ENCODE measurements at regions of chr18 and their contacts with region 1.

Region 1: DNA sequence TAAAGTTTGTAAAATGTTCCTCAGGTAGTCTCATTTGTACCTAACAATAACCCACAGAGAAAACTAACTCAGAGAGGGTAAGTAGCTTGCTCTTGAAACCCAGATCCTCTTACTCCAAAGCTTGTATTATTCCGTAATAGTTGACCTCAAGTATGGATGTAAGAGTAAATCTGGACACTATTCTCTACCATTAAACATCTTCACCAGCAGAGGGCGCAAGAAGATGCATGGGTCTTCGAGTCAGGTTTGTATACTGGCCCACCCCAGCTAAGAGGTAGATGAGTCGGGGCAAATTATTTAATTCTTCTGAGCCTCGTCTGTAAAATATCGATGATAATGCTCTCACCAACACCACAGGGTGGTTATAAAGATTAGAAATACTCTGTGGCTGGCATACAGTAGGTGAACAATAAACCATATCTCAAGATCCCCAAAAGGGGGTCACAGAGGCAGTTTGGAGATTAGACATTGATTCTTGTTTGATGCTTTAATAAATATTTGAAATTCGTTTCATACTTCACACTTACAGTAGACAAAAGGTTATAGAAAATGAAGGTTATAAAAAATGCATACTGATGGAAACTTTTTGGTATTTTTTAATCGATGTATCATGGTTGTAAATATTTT is 3.5 kb upstream of the CABLES1 start:
- DNase-seq: no peak
- ATAC-seq: peak; percentile 77

Region 2: GRCh38 chr18:23243178-23243577 is 111.4 kb after region 1 on chr18:
- intact Hi-C with region 1: no loop called
- DNase-seq: no peak
- ATAC-seq: no peak

Region 3: DNA sequence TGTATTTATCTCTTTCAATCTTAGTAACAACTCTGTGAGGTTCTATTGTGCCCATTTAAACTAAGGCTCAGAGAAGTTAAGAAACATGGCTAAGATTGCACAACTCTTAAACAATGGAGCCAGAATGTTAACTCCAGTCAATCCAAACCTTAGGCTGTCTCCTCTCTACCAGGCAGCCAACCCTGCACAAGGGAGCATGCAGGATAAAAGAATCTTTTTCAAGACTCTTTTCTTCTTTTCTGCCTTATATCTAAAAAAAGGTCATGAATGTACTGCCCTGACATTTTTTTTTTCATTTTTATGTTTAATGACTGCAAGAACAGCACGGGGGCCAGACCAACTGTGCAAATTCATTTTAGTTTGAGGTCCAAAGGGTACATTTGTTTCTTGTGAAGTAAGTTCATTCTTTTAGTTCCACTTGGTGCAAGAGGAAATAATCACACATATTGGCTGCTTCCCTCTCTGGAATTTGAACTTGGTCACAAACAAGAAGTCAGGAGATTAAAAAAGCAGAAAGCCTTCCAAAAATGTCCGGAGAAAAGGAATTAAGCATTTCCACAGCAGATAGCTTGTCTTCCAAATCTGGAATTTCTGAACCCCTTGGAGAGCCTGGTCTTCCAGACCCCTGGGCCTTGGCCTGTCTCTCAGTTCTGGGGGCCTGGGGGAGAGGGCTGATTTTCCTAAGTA is 225.3 kb after region 1 on chr18:
- intact Hi-C with region 1: loop called (anchors 5 kb)
- DNase-seq: no peak
- ATAC-seq: peak; percentile 24